ENCODE measurements at regions of chr9 and their contacts with region 1.

Region 1: GRCh38 chr9:15529566-15530324 is 19.0 kb upstream of the PSIP1 start:
- DNase-seq: no peak
- H3K4me3 ChIP-seq: no peak overlapping the region
- H3K4me3 Mint-ChIP-seq: no peak overlapping the region
- H3K27ac ChIP-seq: no peak overlapping the region
- H3K27ac Mint-ChIP-seq: no peak overlapping the region
- H3K4me1 ChIP-seq: no peaks in the 10 kb centered on the region
- H3K4me1 Mint-ChIP-seq: peaks cover 0 to 6% (median 4%) of the 10 kb centered on the region in 4 donors
- H3K27me3 ChIP-seq: no peaks in the 10 kb centered on the region
- H3K27me3 Mint-ChIP-seq: no peaks in the 10 kb centered on the region

Region 2: DNA sequence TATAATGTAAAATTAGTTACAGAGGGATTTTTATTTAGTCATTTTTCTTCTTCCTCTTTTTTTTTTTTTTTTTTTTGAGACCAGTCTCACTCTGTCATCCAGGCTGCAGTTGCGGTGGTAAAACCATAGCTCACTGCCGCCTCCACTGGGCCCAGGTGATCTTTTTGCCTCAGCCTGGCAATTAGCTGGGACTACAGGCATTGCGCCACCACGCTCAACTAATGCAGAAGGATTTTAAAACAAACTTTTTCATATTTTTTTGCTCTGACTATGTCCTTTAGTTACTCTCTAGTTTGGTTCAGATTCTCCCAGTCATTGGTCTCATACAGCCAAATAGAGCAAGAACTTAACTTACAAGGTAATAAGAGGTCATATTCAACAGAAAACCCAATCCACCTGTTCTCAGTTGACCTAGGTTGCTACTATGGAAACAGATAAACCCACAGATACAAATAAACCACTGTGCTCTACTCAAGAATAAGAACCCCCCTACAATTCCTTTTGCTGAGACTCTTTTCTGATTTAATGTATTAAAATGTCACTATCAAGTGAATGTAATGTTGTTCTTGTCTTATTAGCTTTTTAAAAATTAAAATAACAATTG is 172.6 kb before region 1 on chr9:
- CTCF ChIA-PET with region 1: no interaction called
- POLR2A ChIA-PET with region 1: no interaction called
- intact Hi-C with region 1: loop called (anchors 5 kb)
- DNase-seq: peak in 4 of 5 donors; percentile 4 to 61 (median 28)
- H3K4me3 ChIP-seq: no peak overlapping the region
- H3K4me3 Mint-ChIP-seq: peak overlapping the region in 2 of 8 donors; percentile 45 to 61
- H3K27ac ChIP-seq: no peak overlapping the region
- H3K27ac Mint-ChIP-seq: peak overlapping the region in 4 of 7 donors; percentile 31 to 83 (median 62)
- H3K4me1 ChIP-seq: peaks cover 11% of the 10 kb centered on the region
- H3K4me1 Mint-ChIP-seq: peaks cover 8 to 28% (median 13%) of the 10 kb centered on the region in 4 donors
- H3K27me3 ChIP-seq: no peaks in the 10 kb centered on the region
- H3K27me3 Mint-ChIP-seq: no peaks in the 10 kb centered on the region

Region 3: DNA sequence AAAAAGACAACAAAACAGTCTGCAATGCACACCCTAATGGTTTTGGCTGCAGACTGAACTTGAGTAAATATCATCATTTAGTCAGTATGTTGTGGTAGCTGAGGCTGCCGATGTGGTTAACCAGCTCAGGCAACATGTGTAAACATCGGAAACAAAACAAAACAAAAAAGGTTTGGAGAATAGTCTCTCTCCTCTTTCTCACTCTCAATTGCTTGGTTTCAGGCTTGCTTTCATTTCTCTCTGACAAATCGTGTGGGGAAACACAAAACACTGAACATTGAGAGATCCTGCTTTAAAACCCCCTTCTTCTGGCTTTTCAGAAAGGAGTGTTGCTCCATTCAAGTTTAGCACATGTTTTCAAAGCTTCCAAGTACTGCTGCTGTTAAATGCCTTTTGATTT is 887.4 kb after region 1 on chr9:
- CTCF ChIA-PET with region 1: no interaction called
- POLR2A ChIA-PET with region 1: no interaction called
- intact Hi-C with region 1: no loop called
- DNase-seq: no peak
- H3K4me3 ChIP-seq: no peak overlapping the region
- H3K4me3 Mint-ChIP-seq: no peak overlapping the region
- H3K27ac ChIP-seq: no peak overlapping the region
- H3K27ac Mint-ChIP-seq: no peak overlapping the region
- H3K4me1 ChIP-seq: no peaks in the 10 kb centered on the region
- H3K4me1 Mint-ChIP-seq: no peaks in the 10 kb centered on the region
- H3K27me3 ChIP-seq: no peaks in the 10 kb centered on the region
- H3K27me3 Mint-ChIP-seq: no peaks in the 10 kb centered on the region